ENCODE measurements at regions of chr20 and their contacts with region 1.

Region 1: GRCh38 chr20:21571841-21572690 is 58.2 kb upstream of the NKX2-2 start:
- DNase-seq: peak; percentile 21
- ATAC-seq: peak; percentile 27
- H3K4me3 Mint-ChIP-seq: no peak overlapping the region
- H3K27ac Mint-ChIP-seq: no peak overlapping the region
- H3K4me1 Mint-ChIP-seq: peaks cover 6% of the 10 kb centered on the region
- H3K27me3 Mint-ChIP-seq: peaks cover 15% of the 10 kb centered on the region
- CTCF ChIP-seq: peak; percentile 98

Region 2: DNA sequence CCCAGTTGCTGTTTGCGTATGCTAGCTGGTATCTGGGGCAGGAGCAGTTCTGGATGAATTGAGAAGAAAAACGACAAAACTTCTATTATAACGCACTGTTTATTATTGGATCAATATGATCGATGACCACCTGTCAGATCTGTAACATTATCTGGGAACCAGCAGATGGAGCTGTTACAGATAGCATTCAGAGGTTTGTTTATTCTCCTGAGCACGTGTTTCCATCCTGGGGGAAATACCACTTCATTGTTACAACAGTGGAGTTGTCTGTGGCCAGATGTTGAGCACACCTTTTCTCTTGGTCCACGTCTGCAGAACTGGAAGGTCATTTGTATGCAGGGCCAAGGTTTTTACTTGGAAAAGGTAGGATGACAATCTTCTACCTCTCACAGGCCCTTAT is 42.2 kb before region 1 on chr20:
- CTCF ChIA-PET with region 1: interaction called, 36 read pairs
- POLR2A ChIA-PET with region 1: no interaction called
- intact Hi-C with region 1: loop called (anchors 5 kb)
- DNase-seq: no peak
- ATAC-seq: no peak
- H3K4me3 Mint-ChIP-seq: no peak overlapping the region
- H3K27ac Mint-ChIP-seq: no peak overlapping the region
- H3K4me1 Mint-ChIP-seq: peaks cover 2% of the 10 kb centered on the region
- H3K27me3 Mint-ChIP-seq: peaks cover 35% of the 10 kb centered on the region
- CTCF ChIP-seq: peak; percentile 42

Region 3: GRCh38 chr20:21557241-21558020 is 14.6 kb before region 1 on chr20:
- CTCF ChIA-PET with region 1: interaction called, 16 read pairs
- POLR2A ChIA-PET with region 1: no interaction called
- intact Hi-C with region 1: no loop called
- DNase-seq: peak; percentile 8
- ATAC-seq: peak; percentile 56
- H3K4me3 Mint-ChIP-seq: no peak overlapping the region
- H3K27ac Mint-ChIP-seq: no peak overlapping the region
- H3K4me1 Mint-ChIP-seq: peaks cover 14% of the 10 kb centered on the region
- H3K27me3 Mint-ChIP-seq: peaks cover 5% of the 10 kb centered on the region
- CTCF ChIP-seq: no peak

Region 4: GRCh38 chr20:21665687-21666446 is 93.8 kb after region 1 on chr20:
- CTCF ChIA-PET with region 1: no interaction called
- POLR2A ChIA-PET with region 1: no interaction called
- intact Hi-C with region 1: no loop called
- DNase-seq: no peak
- ATAC-seq: no peak
- H3K4me3 Mint-ChIP-seq: no peak overlapping the region
- H3K27ac Mint-ChIP-seq: no peak overlapping the region
- H3K4me1 Mint-ChIP-seq: no peaks in the 10 kb centered on the region
- H3K27me3 Mint-ChIP-seq: no peaks in the 10 kb centered on the region
- CTCF ChIP-seq: no peak

Measured in activated CD8-positive, alpha-beta T cell treated with anti-CD3 and anti-CD28 coated beads for 36 hours (primary cell).